Dorsolateral prefrontal cortex (tissue), 120 donors: ENCODE measurements at regions of chr18 and their contacts with region 1.

Region 1: GRCh38 chr18:63848159-63848558 is 39.3 kb upstream of the SERPINB2 start:
- DNase-seq: no peak
- H3K4me3 ChIP-seq: no peak overlapping the region
- H3K27ac ChIP-seq: no peak overlapping the region
- H3K27me3 ChIP-seq: peaks cover 0 to 8% (median 0%) of the 10 kb centered on the region in 45 donors
- CTCF ChIP-seq: peak in 55 of 56 donors; percentile 14 to 72 (median 46)

Region 2: GRCh38 chr18:63395503-63395902 is 452.7 kb before region 1 on chr18:
- intact Hi-C with region 1: no loop called
- DNase-seq: no peak
- H3K4me3 ChIP-seq: no peak overlapping the region
- H3K27ac ChIP-seq: no peak overlapping the region
- H3K27me3 ChIP-seq: no peaks in the 10 kb centered on the region
- CTCF ChIP-seq: no peak

Region 3: DNA sequence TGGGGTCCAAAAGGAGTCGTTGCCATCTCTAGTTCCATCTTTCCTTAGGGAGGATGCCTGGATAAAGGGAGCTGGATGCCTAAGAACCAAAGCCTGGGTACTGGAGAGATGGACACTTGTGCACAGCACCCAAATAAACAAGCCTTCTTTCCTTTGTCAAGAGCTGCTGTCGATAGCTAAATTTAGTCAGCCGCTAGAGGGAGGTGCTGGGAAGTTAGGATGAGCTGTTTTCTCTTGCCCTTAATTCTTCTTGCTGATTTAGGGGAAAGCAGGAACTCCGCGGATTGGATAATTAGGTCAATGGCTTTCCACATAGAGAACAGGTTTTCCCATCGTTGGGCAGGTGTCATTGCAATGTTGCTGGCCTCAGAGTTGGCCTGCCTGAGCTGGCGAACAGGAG is 336.9 kb before region 1 on chr18:
- intact Hi-C with region 1: loop called in 1 of 2 experiments (anchors 5 kb)
- DNase-seq: no peak
- H3K4me3 ChIP-seq: no peak overlapping the region
- H3K27ac ChIP-seq: no peak overlapping the region
- H3K27me3 ChIP-seq: peaks cover 0 to 7% (median 0%) of the 10 kb centered on the region in 45 donors
- CTCF ChIP-seq: peak in 51 of 56 donors; percentile 28 to 60 (median 44)

Region 4: GRCh38 chr18:63518178-63519012 is 329.8 kb before region 1 on chr18:
- intact Hi-C with region 1: loop called (anchors 2 to 5 kb)
- DNase-seq: peak in 7 of 10 donors; percentile 32 to 70 (median 46)
- H3K4me3 ChIP-seq: no peak overlapping the region
- H3K27ac ChIP-seq: no peak overlapping the region
- H3K27me3 ChIP-seq: peaks cover 0 to 13% (median 0%) of the 10 kb centered on the region in 45 donors
- CTCF ChIP-seq: peak; percentile 74 to 96 (median 86)

Region 5: GRCh38 chr18:63523660-63524059 is 324.5 kb before region 1 on chr18:
- intact Hi-C with region 1: loop called (anchors 2 to 5 kb)
- DNase-seq: no peak
- H3K4me3 ChIP-seq: no peak overlapping the region
- H3K27ac ChIP-seq: no peak overlapping the region
- H3K27me3 ChIP-seq: peaks cover 0 to 13% (median 0%) of the 10 kb centered on the region in 45 donors
- CTCF ChIP-seq: no peak

Region 6: DNA sequence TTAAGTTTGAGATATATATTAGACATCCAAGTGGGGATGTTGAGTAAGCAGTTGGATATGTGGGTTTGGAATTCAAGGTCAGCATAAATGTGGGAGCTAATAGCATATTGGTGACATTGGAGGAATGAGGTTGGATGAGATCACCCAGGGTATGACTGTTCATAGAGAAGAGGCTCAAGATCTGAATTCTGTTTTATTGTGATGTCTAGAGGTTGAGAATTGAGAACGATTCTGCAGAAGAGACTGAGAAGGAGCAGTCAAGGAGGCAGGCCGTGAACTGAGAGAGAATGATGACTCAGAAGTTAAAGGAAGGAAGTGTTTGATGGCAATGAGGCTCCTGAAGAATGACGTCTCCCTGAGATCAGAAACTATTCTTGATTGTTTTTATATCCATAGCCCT is 139.5 kb before region 1 on chr18:
- intact Hi-C with region 1: no loop called
- DNase-seq: no peak
- H3K4me3 ChIP-seq: no peak overlapping the region
- H3K27ac ChIP-seq: no peak overlapping the region
- H3K27me3 ChIP-seq: peaks cover 0 to 4% (median 0%) of the 10 kb centered on the region in 45 donors
- CTCF ChIP-seq: no peak

Region 7: DNA sequence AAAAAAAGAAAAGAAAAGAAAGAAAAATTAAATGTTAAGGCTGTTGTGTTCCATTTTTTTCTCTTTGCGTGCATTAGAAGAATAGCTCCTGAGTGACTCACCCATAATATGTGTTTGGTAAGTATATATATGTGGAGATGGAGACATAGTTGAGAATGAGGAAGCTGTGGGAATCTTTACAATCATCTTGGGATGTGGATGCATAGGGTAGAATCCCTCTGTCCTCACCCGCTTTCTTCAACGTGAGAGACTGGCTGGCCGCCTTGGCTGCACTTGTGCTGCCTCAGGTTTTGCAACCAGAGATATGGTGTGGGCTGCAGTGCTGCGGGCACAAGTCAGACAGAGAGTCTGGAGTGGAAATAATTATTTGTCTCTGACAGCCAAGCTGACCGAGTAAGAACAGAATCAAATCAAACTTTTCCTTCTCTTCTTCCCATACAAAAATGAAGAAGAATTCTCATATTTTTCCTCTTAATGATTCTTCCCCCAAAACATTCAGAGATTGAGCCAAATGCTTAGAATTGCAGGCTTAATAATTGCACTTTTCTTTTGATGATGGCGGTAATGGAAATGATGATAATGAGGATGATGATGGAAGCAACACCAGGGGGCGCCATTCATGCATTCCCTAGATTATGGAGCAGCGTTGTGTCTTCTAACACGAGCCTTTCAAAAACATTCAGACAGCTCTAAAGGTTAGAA is 24.5 kb before region 1 on chr18:
- intact Hi-C with region 1: no loop called
- DNase-seq: peak in 3 of 10 donors; percentile 24 to 55 (median 49)
- H3K4me3 ChIP-seq: no peak overlapping the region
- H3K27ac ChIP-seq: no peak overlapping the region
- H3K27me3 ChIP-seq: peaks cover 0 to 17% (median 0%) of the 10 kb centered on the region in 45 donors
- CTCF ChIP-seq: peak in 54 of 56 donors; percentile 24 to 68 (median 52)

Region 8: GRCh38 chr18:63907664-63908063 is 59.5 kb after region 1 on chr18 and contains the start of gene SERPINB10:
- intact Hi-C with region 1: no loop called
- DNase-seq: no peak
- H3K4me3 ChIP-seq: no peak within 1 kb of the TSS
- H3K27ac ChIP-seq: no peak within 1 kb of the TSS
- H3K27me3 ChIP-seq: no peaks in the 10 kb centered on the region
- CTCF ChIP-seq: no peak
- total RNA-seq, gene SERPINB10: 0.26 to 1.6 (median 0.63) TPM in 5 of 120 experiments, not detected in the others

Region 9: GRCh38 chr18:63969960-63970802 is 122.0 kb after region 1 on chr18 and contains the start of gene SERPINB8:
- intact Hi-C with region 1: loop called in 1 of 2 experiments (anchors 10 kb)
- DNase-seq: peak; percentile 79 to 97 (median 93)
- H3K4me3 ChIP-seq: peak within 1 kb of the TSS; percentile 67 to 98 (median 87)
- H3K27ac ChIP-seq: peak within 1 kb of the TSS; percentile 82 to 99 (median 97)
- H3K27me3 ChIP-seq: no peaks in the 10 kb centered on the region
- CTCF ChIP-seq: peak in 31 of 56 donors; percentile 5 to 53 (median 21)
- total RNA-seq, gene SERPINB8: 1.8 to 12.8 (median 5.7) TPM